ENCODE measurements at regions of chr5 and their contacts with region 1.

Region 1: GRCh38 chr5:9207817-9208418 is 338.0 kb downstream of the SEMA5A start:
- DNase-seq: peak; percentile 35
- CTCF ChIP-seq: peak; percentile 60

Region 2: GRCh38 chr5:7927466-7928375 is 1280.2 kb before region 1 on chr5:
- in situ Hi-C with region 1: loop called (anchors 25 kb)
- DNase-seq: peak; percentile 69
- CTCF ChIP-seq: peak; percentile 88

Region 3: GRCh38 chr5:8864053-8864452 is 343.9 kb before region 1 on chr5:
- in situ Hi-C with region 1: loop called (anchors 25 kb)
- DNase-seq: no peak
- CTCF ChIP-seq: peak; percentile 58

Region 4: DNA sequence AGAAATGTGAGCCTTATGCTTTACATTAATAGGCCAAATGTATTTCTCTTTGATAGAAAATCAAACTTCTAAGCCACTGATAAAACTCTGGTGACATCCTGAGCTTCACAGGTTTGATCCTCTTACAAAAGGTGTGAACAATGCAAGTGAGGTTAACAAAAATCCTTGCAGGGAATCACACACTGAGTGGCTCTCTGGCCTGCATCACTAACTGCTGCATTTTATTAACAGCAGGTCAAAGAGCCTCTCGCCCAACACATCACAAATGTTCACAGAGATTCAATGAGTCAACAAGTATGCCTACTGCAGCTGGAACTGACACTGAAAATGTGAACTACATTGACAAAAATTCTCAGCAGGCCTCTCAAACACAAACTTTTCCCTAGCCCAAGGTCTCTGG is 215.7 kb after region 1 on chr5:
- in situ Hi-C with region 1: no loop called
- DNase-seq: no peak
- CTCF ChIP-seq: no peak

Measured in GM13977 (cell line).